ENCODE measurements at regions of chr22 and their contacts with region 1.

Region 1: DNA sequence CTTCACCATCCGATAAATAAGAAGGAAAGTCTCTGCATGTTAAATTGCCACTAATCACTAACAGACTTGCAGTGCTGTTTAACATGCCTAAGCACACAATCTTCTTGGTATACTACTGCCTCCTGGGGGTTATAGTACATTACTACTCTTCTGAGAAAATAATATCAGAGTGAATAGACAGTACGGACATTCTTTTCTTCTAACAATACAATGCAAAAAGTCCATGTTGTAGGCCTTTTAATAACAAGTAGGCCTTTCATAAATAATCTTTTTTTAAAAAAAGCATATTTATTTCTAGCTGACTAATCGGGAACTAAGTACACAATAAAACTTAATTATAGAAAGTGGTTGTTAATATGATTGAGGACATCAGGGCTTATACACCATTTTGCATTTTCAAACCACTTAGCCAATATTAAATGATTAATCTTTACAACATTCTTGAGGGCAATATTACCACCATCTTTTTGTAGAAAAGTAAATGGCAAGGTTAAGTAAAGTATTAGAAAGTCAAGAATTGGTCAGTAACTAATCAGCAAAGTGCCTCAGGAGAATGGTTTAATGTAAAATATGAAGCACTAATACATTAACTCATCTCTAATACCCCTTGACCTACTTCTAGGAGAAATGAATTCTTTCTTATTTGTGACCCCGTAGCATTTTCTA is 84.7 kb downstream of the TTC28 start:
- DNase-seq: no peak
- ATAC-seq: peak; percentile 79 to 93 (median 86)
- H3K4me3 ChIP-seq: no peak overlapping the region
- H3K27ac ChIP-seq: no peak overlapping the region
- H3K4me1 ChIP-seq: peaks cover 0 to 4% (median 0%) of the 10 kb centered on the region in 12 donors
- H3K27me3 ChIP-seq: no peaks in the 10 kb centered on the region
- CTCF ChIP-seq: peak; percentile 64 to 93 (median 78)
- POLR2A ChIP-seq: no peak

Region 2: GRCh38 chr22:26672590-26673468 is 1922.1 kb before region 1 on chr22:
- intact Hi-C with region 1: loop called in 1 of 10 experiments (anchors 10 kb)
- DNase-seq: peak; percentile 92 to 95 (median 94)
- ATAC-seq: peak; percentile 92 to 96 (median 93)
- H3K4me3 ChIP-seq: peak overlapping the region; percentile 40 to 92 (median 78)
- H3K27ac ChIP-seq: peak overlapping the region; percentile 92 to 100 (median 96)
- H3K4me1 ChIP-seq: peaks cover 0 to 49% (median 24%) of the 10 kb centered on the region in 12 donors
- H3K27me3 ChIP-seq: no peaks in the 10 kb centered on the region
- CTCF ChIP-seq: peak; percentile 31 to 80 (median 56)
- POLR2A ChIP-seq: peak in 1 of 2 donors; percentile 11

Region 3: GRCh38 chr22:28019881-28020871 is 574.8 kb before region 1 on chr22:
- intact Hi-C with region 1: loop called (anchors 1 to 5 kb)
- DNase-seq: peak; percentile 66 to 86 (median 73)
- ATAC-seq: peak; percentile 56 to 73 (median 70)
- H3K4me3 ChIP-seq: no peak overlapping the region
- H3K27ac ChIP-seq: peak overlapping the region in 2 of 12 donors; percentile 26 to 48
- H3K4me1 ChIP-seq: peaks cover 0 to 49% (median 19%) of the 10 kb centered on the region in 12 donors
- H3K27me3 ChIP-seq: no peaks in the 10 kb centered on the region
- CTCF ChIP-seq: peak; percentile 91 to 99 (median 96)
- POLR2A ChIP-seq: no peak

Region 4: DNA sequence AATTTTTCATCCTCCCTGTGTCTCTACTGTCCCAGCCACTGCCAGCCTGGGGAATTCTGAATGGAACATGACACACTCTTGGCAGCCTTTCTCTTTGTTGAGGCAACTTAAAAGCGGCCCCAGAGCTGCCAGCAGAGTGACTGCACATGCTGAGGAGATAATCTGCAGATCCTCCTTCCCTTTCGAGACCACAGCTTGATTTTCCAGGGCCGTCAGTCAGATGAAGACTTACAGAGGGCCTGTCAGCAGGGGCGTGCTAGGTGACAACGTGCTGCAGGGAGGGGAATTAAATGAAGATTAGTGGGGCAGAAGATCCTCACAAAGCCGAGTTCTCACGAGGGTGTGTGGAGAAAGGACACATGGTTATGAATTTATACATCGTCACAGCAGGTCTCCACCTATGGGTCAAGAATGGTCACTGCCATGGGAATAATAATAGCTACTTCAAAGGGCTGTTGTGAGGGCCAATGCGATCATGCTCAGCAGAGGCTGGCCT is 482.3 kb before region 1 on chr22:
- intact Hi-C with region 1: loop called in 1 of 10 experiments (anchors 10 kb)
- DNase-seq: peak in 4 of 5 donors; percentile 35 to 78 (median 63)
- ATAC-seq: peak; percentile 72 to 80 (median 76)
- H3K4me3 ChIP-seq: peak overlapping the region in 1 of 12 donors; percentile 27
- H3K27ac ChIP-seq: peak overlapping the region in 11 of 12 donors; percentile 27 to 75 (median 50)
- H3K4me1 ChIP-seq: peaks cover 0 to 39% (median 15%) of the 10 kb centered on the region in 12 donors
- H3K27me3 ChIP-seq: no peaks in the 10 kb centered on the region
- CTCF ChIP-seq: peak; percentile 20 to 59 (median 43)
- POLR2A ChIP-seq: no peak

Region 5: GRCh38 chr22:29040385-29041275 is 445.7 kb after region 1 on chr22:
- intact Hi-C with region 1: loop called in 8 of 10 experiments (anchors 2 to 10 kb)
- DNase-seq: peak in 4 of 5 donors; percentile 39 to 61 (median 52)
- ATAC-seq: peak in 3 of 4 donors; percentile 69 to 84 (median 76)
- H3K4me3 ChIP-seq: no peak overlapping the region
- H3K27ac ChIP-seq: no peak overlapping the region
- H3K4me1 ChIP-seq: peaks cover 0 to 10% (median 0%) of the 10 kb centered on the region in 12 donors
- H3K27me3 ChIP-seq: no peaks in the 10 kb centered on the region
- CTCF ChIP-seq: peak; percentile 93 to 99 (median 96)
- POLR2A ChIP-seq: no peak

Measured in heart left ventricle (tissue), 16 donors.